ENCODE measurements at regions of chr7 and their contacts with region 1.

Region 1: GRCh38 chr7:54946749-54947148 is 72.1 kb upstream of the EGFR start:
- DNase-seq: peak; percentile 48 to 88
- H3K4me3 ChIP-seq: no peak overlapping the region
- H3K27ac ChIP-seq: peak overlapping the region; percentile 44
- H3K4me1 ChIP-seq: peaks cover 19% of the 10 kb centered on the region
- H3K27me3 ChIP-seq: no peaks in the 10 kb centered on the region
- CTCF ChIP-seq: no peak

Region 2: DNA sequence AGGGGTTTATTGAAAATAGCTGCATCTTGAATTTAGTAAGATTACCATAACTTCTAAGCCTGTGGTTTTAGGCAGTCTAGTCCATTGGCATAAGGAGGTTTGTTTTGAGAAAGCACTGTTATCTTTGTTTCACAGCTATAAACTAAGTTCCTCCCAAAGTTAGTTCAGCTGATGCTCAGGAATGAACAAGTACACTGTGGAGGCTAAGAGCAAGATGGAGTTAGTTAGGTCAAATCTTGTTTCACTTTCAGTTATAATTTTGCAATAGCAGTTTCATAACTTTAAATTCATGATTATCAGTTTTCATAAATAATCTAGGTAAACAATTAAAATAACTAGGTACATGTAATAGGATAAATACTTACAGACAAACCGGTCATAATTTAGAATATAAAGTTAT is 203.2 kb before region 1 on chr7:
- CTCF ChIA-PET with region 1: no interaction called
- POLR2A ChIA-PET with region 1: no interaction called
- intact Hi-C with region 1: no loop called
- DNase-seq: no peak
- H3K4me3 ChIP-seq: no peak overlapping the region
- H3K27ac ChIP-seq: no peak overlapping the region
- H3K4me1 ChIP-seq: no peaks in the 10 kb centered on the region
- H3K27me3 ChIP-seq: no peaks in the 10 kb centered on the region
- CTCF ChIP-seq: no peak

Region 3: DNA sequence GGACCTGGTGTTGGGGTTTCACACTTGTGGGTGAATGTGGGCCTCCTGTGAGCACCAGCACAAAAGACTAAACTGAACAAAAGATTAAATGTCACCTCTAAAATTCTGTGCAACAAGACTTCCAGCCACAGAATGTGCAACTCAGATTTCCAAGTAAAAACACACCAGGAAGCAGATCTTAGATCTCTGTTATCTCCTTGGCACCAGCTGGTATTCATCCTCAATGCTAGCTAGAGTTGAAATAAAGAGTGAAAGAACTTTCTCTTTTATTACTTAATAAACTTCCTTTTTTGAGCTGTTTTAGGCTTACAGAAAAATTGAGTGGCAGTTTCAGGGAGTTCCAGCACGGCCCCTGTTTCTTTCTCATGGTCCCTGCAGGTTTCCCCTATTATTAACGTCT is 112.3 kb after region 1 on chr7:
- CTCF ChIA-PET with region 1: no interaction called
- POLR2A ChIA-PET with region 1: interaction called, 10 read pairs
- intact Hi-C with region 1: no loop called
- DNase-seq: no peak
- H3K4me3 ChIP-seq: no peak overlapping the region
- H3K27ac ChIP-seq: peak overlapping the region; percentile 36
- H3K4me1 ChIP-seq: peaks cover 46% of the 10 kb centered on the region
- H3K27me3 ChIP-seq: no peaks in the 10 kb centered on the region
- CTCF ChIP-seq: no peak

Measured in PC-9 (cell line).